ENCODE measurements at regions of chr12 and their contacts with region 1.

Region 1: GRCh38 chr12:46382964-46383653 is 10.5 kb upstream of the SLC38A2 start:
- DNase-seq: peak; percentile 97
- ATAC-seq: peak; percentile 81
- H3K4me3 ChIP-seq: peak overlapping the region; percentile 69
- H3K27ac ChIP-seq: peak overlapping the region; percentile 98
- H3K4me1 ChIP-seq: peaks cover 17% of the 10 kb centered on the region
- H3K27me3 ChIP-seq: no peaks in the 10 kb centered on the region
- CTCF ChIP-seq: no peak
- POLR2A ChIP-seq: no peak
- RAD21 ChIP-seq: no peak

Region 2: DNA sequence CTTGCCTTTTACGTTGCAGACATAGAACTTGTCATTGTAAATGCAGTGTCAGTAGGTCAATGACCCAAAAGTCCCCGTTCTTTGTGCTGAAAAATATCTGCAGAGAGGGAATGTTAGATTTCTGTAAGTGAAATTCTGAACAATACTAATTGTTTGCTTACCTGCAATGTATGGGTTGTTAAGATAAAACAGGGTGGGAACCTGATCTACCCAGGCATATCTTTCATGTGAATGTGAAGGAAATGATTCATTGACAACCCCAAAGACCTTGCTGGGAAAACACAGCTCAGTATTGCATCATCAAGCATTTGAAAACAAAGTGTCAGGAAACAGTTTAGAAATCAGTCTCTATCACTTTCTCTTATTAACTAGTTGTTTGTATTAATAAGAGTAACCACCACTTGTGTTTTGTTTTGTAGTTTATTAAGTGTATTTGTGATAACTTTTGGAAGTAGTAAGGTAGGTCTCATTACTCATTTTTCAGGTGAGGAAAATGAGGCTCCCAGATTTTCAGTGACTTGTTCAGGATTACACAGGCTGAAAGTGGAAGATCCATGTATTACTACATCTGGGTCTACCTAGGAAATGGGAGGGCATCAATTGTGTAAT is 47.3 kb after region 1 on chr12:
- CTCF ChIA-PET with region 1: no interaction called
- POLR2A ChIA-PET with region 1: interaction called, 13 read pairs
- dilution Hi-C with region 1: no loop called
- in situ Hi-C with region 1: no loop called
- intact Hi-C with region 1: loop called (anchors 1 kb)
- DNase-seq: peak; percentile 89
- ATAC-seq: peak; percentile 15; the same call in 1 of the 2 replicates
- H3K4me3 ChIP-seq: no peak overlapping the region
- H3K27ac ChIP-seq: peak overlapping the region; percentile 66
- H3K4me1 ChIP-seq: peaks cover 10% of the 10 kb centered on the region
- H3K27me3 ChIP-seq: no peaks in the 10 kb centered on the region
- CTCF ChIP-seq: no peak
- POLR2A ChIP-seq: no peak
- RAD21 ChIP-seq: no peak

Region 3: GRCh38 chr12:46492471-46493351 is 109.6 kb after region 1 on chr12:
- CTCF ChIA-PET with region 1: no interaction called
- POLR2A ChIA-PET with region 1: interaction called, 4 read pairs
- dilution Hi-C with region 1: no loop called
- in situ Hi-C with region 1: loop called (anchors 10 kb)
- intact Hi-C with region 1: loop called (anchors 1 kb)
- DNase-seq: peak; percentile 97
- ATAC-seq: peak; percentile 65
- H3K4me3 ChIP-seq: no peak overlapping the region
- H3K27ac ChIP-seq: peak overlapping the region; percentile 93; the same call in 1 of the 2 replicates
- H3K4me1 ChIP-seq: peaks cover 27% of the 10 kb centered on the region
- H3K27me3 ChIP-seq: no peaks in the 10 kb centered on the region
- CTCF ChIP-seq: no peak
- POLR2A ChIP-seq: no peak
- RAD21 ChIP-seq: no peak

Region 4: GRCh38 chr12:46523863-46524770 is 141.0 kb after region 1 on chr12:
- CTCF ChIA-PET with region 1: interaction called, 6 read pairs
- POLR2A ChIA-PET with region 1: interaction called, 4 read pairs
- dilution Hi-C with region 1: no loop called
- in situ Hi-C with region 1: no loop called
- intact Hi-C with region 1: loop called (anchors 1 kb)
- DNase-seq: peak; percentile 100
- ATAC-seq: peak; percentile 82
- H3K4me3 ChIP-seq: peak overlapping the region; percentile 47
- H3K27ac ChIP-seq: peak overlapping the region; percentile 94
- H3K4me1 ChIP-seq: peaks cover 25% of the 10 kb centered on the region
- H3K27me3 ChIP-seq: no peaks in the 10 kb centered on the region
- CTCF ChIP-seq: no peak
- POLR2A ChIP-seq: peak; percentile 83
- RAD21 ChIP-seq: peak; percentile 21; the same call in 1 of the 2 replicates

Region 5: GRCh38 chr12:46556105-46556559 is 173.0 kb after region 1 on chr12:
- CTCF ChIA-PET with region 1: no interaction called
- POLR2A ChIA-PET with region 1: interaction called, 5 read pairs
- dilution Hi-C with region 1: no loop called
- in situ Hi-C with region 1: loop called (anchors 10 kb)
- intact Hi-C with region 1: loop called (anchors 1 kb)
- DNase-seq: peak; percentile 99
- ATAC-seq: peak; percentile 73
- H3K4me3 ChIP-seq: peak overlapping the region; percentile 10; the same call in 1 of the 2 replicates
- H3K27ac ChIP-seq: peak overlapping the region; percentile 97; the same call in 1 of the 2 replicates
- H3K4me1 ChIP-seq: peaks cover 15% of the 10 kb centered on the region
- H3K27me3 ChIP-seq: no peaks in the 10 kb centered on the region
- CTCF ChIP-seq: no peak
- POLR2A ChIP-seq: no peak
- RAD21 ChIP-seq: peak; percentile 26; the same call in 1 of the 2 replicates

Region 6: GRCh38 chr12:46627686-46628085 is 244.6 kb after region 1 on chr12:
- CTCF ChIA-PET with region 1: no interaction called
- POLR2A ChIA-PET with region 1: no interaction called
- dilution Hi-C with region 1: no loop called
- in situ Hi-C with region 1: no loop called
- intact Hi-C with region 1: loop called (anchors 1 kb)
- DNase-seq: peak; percentile 61
- ATAC-seq: no peak
- H3K4me3 ChIP-seq: no peak overlapping the region
- H3K27ac ChIP-seq: no peak overlapping the region
- H3K4me1 ChIP-seq: peaks cover 15% of the 10 kb centered on the region
- H3K27me3 ChIP-seq: no peaks in the 10 kb centered on the region
- CTCF ChIP-seq: no peak
- POLR2A ChIP-seq: no peak
- RAD21 ChIP-seq: no peak

Region 7: DNA sequence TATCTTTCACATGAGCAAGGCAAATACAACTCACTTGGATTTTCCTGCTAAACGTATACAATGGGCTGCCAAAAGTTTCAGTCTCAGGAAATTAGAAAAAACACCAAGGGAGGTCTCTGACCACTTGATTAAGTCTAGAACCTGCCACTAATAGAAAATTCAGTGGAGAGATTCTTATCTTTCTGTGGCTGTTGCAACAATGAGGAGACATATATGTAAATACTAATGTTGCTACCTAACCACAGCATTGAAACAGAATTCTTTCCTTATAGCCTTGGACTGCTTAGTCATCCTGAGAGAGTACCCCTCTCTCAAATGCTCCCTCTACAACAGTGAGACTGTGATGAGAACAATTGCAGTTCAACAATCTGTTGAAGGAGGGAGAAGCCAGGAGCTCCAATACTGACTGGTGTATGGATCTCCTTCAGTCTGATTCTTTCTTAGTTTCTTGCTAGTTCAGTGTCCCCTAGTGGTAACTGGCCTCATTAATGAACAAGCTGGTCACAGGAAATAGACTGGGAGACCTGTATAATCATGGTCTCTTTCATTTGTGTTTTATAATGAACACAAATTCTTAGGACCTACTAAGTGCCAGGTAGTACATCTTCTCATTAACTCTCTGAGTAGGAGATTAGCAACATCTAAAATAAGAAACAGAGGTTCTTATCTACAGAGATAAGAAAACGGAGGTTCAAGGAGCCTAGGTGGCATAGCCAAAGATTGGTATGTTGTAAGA is 278.2 kb after region 1 on chr12:
- CTCF ChIA-PET with region 1: no interaction called
- POLR2A ChIA-PET with region 1: no interaction called
- dilution Hi-C with region 1: no loop called
- in situ Hi-C with region 1: loop called (anchors 5 kb)
- intact Hi-C with region 1: loop called (anchors 1 kb)
- DNase-seq: peak; percentile 95
- ATAC-seq: peak; percentile 76
- H3K4me3 ChIP-seq: peak overlapping the region; percentile 14; the same call in 1 of the 2 replicates
- H3K27ac ChIP-seq: peak overlapping the region; percentile 93
- H3K4me1 ChIP-seq: peaks cover 29% of the 10 kb centered on the region
- H3K27me3 ChIP-seq: no peaks in the 10 kb centered on the region
- CTCF ChIP-seq: peak; percentile 87
- POLR2A ChIP-seq: peak; percentile 32; the same call in 1 of the 2 replicates
- RAD21 ChIP-seq: peak; percentile 84